Heart right ventricle (tissue), 16 donors: ENCODE measurements at regions of chr2 and their contacts with region 1.

Region 1: GRCh38 chr2:54899576-54900200 is 150.6 kb downstream of the RTN4 start:
- DNase-seq: no peak
- ATAC-seq: peak in 6 of 8 donors; percentile 52 to 76 (median 70)
- H3K4me3 ChIP-seq: no peak overlapping the region
- H3K27ac ChIP-seq: no peak overlapping the region
- H3K4me1 ChIP-seq: peaks cover 0 to 12% (median 0%) of the 10 kb centered on the region in 9 donors
- H3K27me3 ChIP-seq: no peaks in the 10 kb centered on the region
- CTCF ChIP-seq: peak; percentile 20 to 77 (median 63)

Region 2: DNA sequence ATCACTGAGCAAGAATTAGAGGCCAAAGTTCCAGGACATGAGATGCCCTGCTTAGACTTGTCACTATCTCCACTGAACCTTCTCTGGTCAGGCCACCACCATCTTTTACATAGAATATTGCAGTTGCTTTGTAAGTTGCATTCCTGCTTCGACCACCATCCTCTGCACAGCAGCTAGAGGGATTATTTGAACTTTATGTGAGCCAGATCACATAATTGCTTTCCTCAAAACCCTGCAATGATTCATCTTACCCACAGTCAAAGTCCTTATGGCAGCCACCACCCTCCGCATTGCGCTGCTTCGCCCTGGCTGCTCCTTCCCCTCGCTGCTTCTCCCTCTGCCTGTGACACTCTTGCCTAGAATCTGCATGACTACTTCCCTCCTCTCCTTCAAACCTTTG is 65.0 kb before region 1 on chr2:
- intact Hi-C with region 1: no loop called
- DNase-seq: no peak
- ATAC-seq: no peak
- H3K4me3 ChIP-seq: no peak overlapping the region
- H3K27ac ChIP-seq: no peak overlapping the region
- H3K4me1 ChIP-seq: peaks cover 0 to 3% (median 0%) of the 10 kb centered on the region in 9 donors
- H3K27me3 ChIP-seq: no peaks in the 10 kb centered on the region
- CTCF ChIP-seq: no peak

Region 3: GRCh38 chr2:55014962-55015939 is 115.6 kb after region 1 on chr2:
- intact Hi-C with region 1: loop called in 5 of 10 experiments (anchors 2 to 10 kb)
- DNase-seq: peak in 1 of 2 donors; percentile 48
- ATAC-seq: peak in 7 of 8 donors; percentile 64 to 87 (median 79)
- H3K4me3 ChIP-seq: no peak overlapping the region
- H3K27ac ChIP-seq: no peak overlapping the region
- H3K4me1 ChIP-seq: peaks cover 0 to 95% (median 52%) of the 10 kb centered on the region in 9 donors
- H3K27me3 ChIP-seq: no peaks in the 10 kb centered on the region
- CTCF ChIP-seq: peak; percentile 30 to 79 (median 70)

Region 4: DNA sequence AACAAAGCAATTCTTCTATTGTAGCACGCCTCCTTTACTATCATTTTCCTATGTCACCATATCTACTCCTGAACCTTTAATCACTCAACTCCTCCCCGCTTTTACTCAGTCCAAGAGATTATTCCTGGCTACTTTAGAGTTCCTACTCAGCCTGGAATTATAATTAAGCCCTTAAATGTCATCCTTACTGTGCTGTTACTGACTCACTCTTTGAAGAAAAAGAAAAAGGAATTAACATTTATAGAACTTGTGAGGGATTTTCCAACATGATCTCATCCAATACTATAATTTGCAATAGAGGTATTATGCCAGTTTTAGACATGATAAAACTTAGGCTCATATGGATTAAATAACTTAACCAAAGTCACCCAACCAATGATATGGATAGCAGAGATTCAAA is 458.2 kb after region 1 on chr2:
- intact Hi-C with region 1: no loop called
- DNase-seq: no peak
- ATAC-seq: no peak
- H3K4me3 ChIP-seq: no peak overlapping the region
- H3K27ac ChIP-seq: no peak overlapping the region
- H3K4me1 ChIP-seq: peaks cover 0 to 4% (median 0%) of the 10 kb centered on the region in 9 donors
- H3K27me3 ChIP-seq: no peaks in the 10 kb centered on the region
- CTCF ChIP-seq: no peak

Region 5: GRCh38 chr2:55519938-55520885 is 620.5 kb after region 1 on chr2:
- intact Hi-C with region 1: no loop called
- DNase-seq: peak in 1 of 2 donors; percentile 37
- ATAC-seq: peak in 7 of 8 donors; percentile 2 to 45 (median 31)
- H3K4me3 ChIP-seq: peak overlapping the region; percentile 42 to 95 (median 82)
- H3K27ac ChIP-seq: peak overlapping the region; percentile 17 to 94 (median 84)
- H3K4me1 ChIP-seq: peaks cover 0 to 22% (median 10%) of the 10 kb centered on the region in 9 donors
- H3K27me3 ChIP-seq: no peaks in the 10 kb centered on the region
- CTCF ChIP-seq: no peak